Right cardiac atrium (tissue), 5 donors: ENCODE measurements at regions of chr2 and their contacts with region 1.

Region 1: GRCh38 chr2:109348671-109349550 is 219.9 kb downstream of the SH3RF3 start:
- DNase-seq: peak in 1 of 3 donors; percentile 43
- ATAC-seq: peak; percentile 15 to 22
- H3K4me3 ChIP-seq: no peak overlapping the region
- H3K27ac ChIP-seq: peak overlapping the region; percentile 28
- H3K4me1 ChIP-seq: peaks cover 3% of the 10 kb centered on the region
- H3K27me3 ChIP-seq: no peaks in the 10 kb centered on the region

Region 2: DNA sequence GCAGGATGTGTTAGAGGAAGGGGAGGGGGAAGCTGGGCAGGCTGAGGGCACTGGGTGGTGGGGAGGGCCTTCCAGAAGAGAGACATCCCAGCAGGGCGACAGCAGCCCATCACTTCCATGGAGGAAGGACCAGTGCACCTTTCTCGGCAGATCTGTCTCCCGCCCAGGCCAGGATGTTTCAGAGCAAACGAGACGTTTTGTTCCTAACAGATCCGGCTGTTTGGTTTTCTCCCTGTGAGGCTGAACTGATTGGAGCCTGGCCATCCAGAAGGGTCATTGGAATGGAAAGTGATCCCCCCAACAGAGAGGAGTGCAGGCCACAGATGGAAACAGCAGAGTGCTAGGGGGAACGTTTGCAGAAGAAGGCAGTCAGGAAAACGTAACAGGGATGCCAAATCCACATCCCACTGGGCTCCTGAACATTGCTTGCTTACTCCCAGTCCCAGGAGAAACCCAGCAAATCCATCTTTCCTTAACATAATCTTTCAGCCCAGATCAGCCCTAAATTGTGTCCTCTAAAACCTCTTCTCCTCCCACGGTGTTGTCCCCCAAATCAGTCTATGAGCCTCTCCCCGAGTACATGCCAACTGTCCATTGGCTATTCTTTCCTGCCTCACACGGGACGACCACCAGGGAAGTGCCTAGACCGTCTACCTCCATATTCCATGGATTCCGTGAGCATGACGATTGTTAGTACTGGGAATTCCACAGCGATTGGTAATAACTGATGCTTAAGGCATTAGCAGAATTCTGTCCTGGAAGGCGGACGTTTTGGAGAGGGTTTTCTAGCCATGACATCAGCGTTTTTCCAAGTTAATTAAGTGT is 138.0 kb after region 1 on chr2:
- intact Hi-C with region 1: loop called in 1 of 4 experiments (anchors 10 kb)
- DNase-seq: no peak
- ATAC-seq: no peak
- H3K4me3 ChIP-seq: no peak overlapping the region
- H3K27ac ChIP-seq: no peak overlapping the region
- H3K4me1 ChIP-seq: peaks cover 13% of the 10 kb centered on the region
- H3K27me3 ChIP-seq: no peaks in the 10 kb centered on the region